MCF 10A (cell line): ENCODE measurements at regions of chr10 and their contacts with region 1.

Region 1: DNA sequence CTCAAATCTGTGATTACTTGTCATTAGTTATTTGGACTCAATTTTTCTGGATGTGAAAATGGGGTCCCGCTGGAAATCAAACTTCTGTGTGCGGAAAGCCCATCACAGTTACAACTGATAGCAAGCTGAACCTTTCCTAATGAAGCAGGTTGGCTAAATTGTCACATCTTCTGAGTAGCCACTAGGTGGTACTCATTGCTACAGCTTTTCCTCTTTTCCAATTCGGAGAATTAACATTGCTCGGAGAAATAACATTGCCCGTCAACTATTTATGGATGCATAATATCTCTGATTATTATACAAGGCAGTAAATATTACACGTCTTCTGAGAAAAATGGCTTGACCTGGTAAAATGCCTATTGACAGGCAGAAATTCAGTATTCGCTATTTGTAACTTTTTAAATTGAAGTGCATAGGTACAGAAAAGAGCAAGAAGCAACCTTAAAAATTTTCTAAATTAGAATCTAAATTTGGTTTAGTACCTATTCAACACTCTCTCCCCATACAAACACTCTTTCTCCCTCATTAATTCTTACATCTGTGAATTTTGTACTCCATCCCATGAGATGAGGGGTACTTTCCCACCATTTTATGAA is 17.3 kb upstream of the BLOC1S2 start:
- DNase-seq: peak; percentile 14
- H3K4me3 Mint-ChIP-seq: no peak overlapping the region
- H3K27ac Mint-ChIP-seq: no peak overlapping the region
- H3K4me1 Mint-ChIP-seq: no peaks in the 10 kb centered on the region
- H3K27me3 Mint-ChIP-seq: peaks cover 31% of the 10 kb centered on the region
- CTCF ChIP-seq: peak; percentile 49

Region 2: GRCh38 chr10:100446130-100446761 is 142.4 kb after region 1 on chr10:
- CTCF ChIA-PET with region 1: no interaction called
- POLR2A ChIA-PET with region 1: no interaction called
- intact Hi-C with region 1: no loop called
- DNase-seq: no peak
- H3K4me3 Mint-ChIP-seq: no peak overlapping the region
- H3K27ac Mint-ChIP-seq: no peak overlapping the region
- H3K4me1 Mint-ChIP-seq: no peaks in the 10 kb centered on the region
- H3K27me3 Mint-ChIP-seq: peaks cover 3% of the 10 kb centered on the region
- CTCF ChIP-seq: no peak

Region 3: GRCh38 chr10:100508691-100509150 is 204.9 kb after region 1 on chr10:
- CTCF ChIA-PET with region 1: interaction called, 5 read pairs
- POLR2A ChIA-PET with region 1: no interaction called
- intact Hi-C with region 1: loop called (anchors 1 kb)
- DNase-seq: peak; percentile 59
- H3K4me3 Mint-ChIP-seq: no peak overlapping the region
- H3K27ac Mint-ChIP-seq: no peak overlapping the region
- H3K4me1 Mint-ChIP-seq: no peaks in the 10 kb centered on the region
- H3K27me3 Mint-ChIP-seq: no peaks in the 10 kb centered on the region
- CTCF ChIP-seq: peak; percentile 62